H1 (cell line): ENCODE measurements at regions of chr4 and their contacts with region 1.

Region 1: GRCh38 chr4:143399113-143399949 is 62.7 kb downstream of the GAB1 start:
- DNase-seq: no peak
- H3K4me3 ChIP-seq: no peak overlapping the region
- H3K27ac ChIP-seq: no peak overlapping the region
- H3K4me1 ChIP-seq: peaks cover 0 to 4% (median 0%) of the 10 kb centered on the region in 4 experiments; a peak in 1 of 7 replicates
- H3K27me3 ChIP-seq: peaks cover 0 to 1% (median 0%) of the 10 kb centered on the region in 4 experiments; a peak in 1 of 7 replicates
- CTCF ChIP-seq: peak in 2 of 3 experiments; percentile 35 to 59; a peak in 2 of 4 replicates
- EP300 ChIP-seq: no peak
- POLR2A ChIP-seq: no peak
- RAD21 ChIP-seq: peak; percentile 11 to 48; a peak in 2 of 4 replicates

Region 2: DNA sequence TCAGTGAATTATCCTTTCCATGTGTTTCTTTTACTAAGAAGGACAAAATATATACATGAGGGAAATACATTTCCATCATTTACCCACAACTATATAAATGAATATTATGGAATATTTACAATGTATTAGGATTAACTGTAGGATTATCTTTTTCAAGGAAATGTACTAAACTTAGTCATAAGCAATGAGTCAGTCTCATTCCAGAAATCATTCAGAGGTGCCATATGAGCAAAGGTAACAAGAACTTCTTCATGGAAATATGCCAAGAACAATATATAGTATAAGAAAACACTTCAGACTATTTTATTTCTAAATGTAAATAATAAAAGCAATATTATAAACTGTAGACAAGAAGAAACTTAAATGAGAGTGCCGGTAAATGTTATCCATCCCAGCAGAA is 147.6 kb before region 1 on chr4:
- CTCF ChIA-PET with region 1: no interaction called
- POLR2A ChIA-PET with region 1: no interaction called
- DNase-seq: no peak
- H3K4me3 ChIP-seq: no peak overlapping the region
- H3K27ac ChIP-seq: no peak overlapping the region
- H3K4me1 ChIP-seq: peaks cover 0 to 2% (median 0%) of the 10 kb centered on the region in 4 experiments; a peak in 1 of 7 replicates
- H3K27me3 ChIP-seq: no peaks in the 10 kb centered on the region
- CTCF ChIP-seq: no peak
- EP300 ChIP-seq: no peak
- POLR2A ChIP-seq: no peak
- RAD21 ChIP-seq: no peak

Region 3: DNA sequence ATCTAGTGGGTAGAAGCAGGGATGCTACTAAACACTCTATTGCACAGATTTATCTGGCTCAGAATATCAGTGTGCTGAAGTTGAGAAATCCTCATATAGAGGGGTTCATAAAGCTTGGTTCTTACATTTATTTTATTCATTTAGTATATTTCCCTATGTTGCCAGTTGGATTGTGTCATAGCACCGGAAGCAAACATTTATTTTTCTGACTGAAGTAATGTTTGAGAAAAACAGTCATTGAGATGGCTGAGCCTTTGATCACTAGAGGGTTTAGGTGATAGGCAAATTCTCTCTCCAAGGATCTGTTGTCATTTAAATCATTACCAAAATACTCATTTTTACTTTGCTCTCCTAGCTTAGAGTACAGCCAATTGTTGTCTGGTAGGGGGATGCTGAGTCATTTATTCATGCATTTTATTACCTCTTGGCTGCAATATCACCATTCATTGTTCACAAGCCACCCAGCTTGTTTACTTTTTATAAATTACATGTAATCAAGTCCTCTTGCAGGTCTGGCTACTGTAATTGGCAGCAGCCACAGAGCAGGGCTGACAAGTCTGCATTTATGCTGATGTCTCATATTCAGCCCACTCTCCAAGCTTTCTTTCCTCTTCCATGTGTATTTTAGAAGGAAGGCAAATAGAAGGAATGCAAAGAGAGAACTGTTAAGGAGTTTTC is 47.4 kb before region 1 on chr4:
- CTCF ChIA-PET with region 1: interaction called, 11 read pairs
- POLR2A ChIA-PET with region 1: no interaction called
- DNase-seq: no peak
- H3K4me3 ChIP-seq: no peak overlapping the region
- H3K27ac ChIP-seq: no peak overlapping the region
- H3K4me1 ChIP-seq: peaks cover 5 to 18% (median 13%) of the 10 kb centered on the region in 4 experiments
- H3K27me3 ChIP-seq: no peaks in the 10 kb centered on the region
- CTCF ChIP-seq: no peak
- EP300 ChIP-seq: no peak
- POLR2A ChIP-seq: no peak
- RAD21 ChIP-seq: no peak

Region 4: DNA sequence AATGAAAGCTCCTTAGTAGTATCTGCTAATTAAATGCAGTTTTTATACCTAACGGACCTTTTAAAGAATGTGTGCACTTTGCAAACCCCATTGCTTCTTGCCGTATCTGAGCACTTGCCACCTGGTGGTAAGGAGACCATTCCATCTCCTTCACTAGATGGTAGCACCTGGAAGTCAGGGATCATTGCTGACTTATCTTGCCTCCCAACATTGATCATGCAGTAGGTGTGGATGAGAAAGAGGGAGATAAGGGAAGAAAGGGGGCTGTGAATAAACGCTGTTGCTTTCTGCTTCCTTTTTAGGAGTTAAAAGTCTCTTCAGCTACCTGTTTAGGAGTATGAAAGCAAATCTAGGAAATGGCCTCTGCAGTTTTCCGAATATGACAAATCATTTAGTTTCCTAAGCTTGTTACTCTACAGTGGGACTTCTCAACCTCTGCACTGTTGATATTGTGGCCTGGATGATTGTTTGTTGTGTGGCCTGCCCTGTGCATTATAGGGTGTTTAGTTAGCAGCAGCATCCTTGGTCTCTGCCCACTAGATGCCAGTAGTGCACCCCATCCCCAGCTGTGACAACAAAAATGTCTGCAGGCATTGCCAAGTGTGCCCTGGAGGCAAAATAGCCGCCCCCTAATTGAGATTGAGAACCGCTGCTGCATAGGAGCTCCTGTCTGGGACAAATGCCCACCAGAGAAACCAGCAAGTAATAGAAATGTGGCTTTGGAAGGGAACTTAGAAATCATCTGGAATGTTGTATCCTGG is 23.8 kb before region 1 on chr4:
- CTCF ChIA-PET with region 1: interaction called, 11 read pairs
- POLR2A ChIA-PET with region 1: no interaction called
- DNase-seq: no peak
- H3K4me3 ChIP-seq: no peak overlapping the region
- H3K27ac ChIP-seq: no peak overlapping the region
- H3K4me1 ChIP-seq: peaks cover 0 to 4% (median 0%) of the 10 kb centered on the region in 4 experiments; a peak in 2 of 7 replicates
- H3K27me3 ChIP-seq: no peaks in the 10 kb centered on the region
- CTCF ChIP-seq: peak; percentile 49 to 62 (median 57)
- EP300 ChIP-seq: no peak
- POLR2A ChIP-seq: no peak
- RAD21 ChIP-seq: peak; percentile 67 to 75

Region 5: DNA sequence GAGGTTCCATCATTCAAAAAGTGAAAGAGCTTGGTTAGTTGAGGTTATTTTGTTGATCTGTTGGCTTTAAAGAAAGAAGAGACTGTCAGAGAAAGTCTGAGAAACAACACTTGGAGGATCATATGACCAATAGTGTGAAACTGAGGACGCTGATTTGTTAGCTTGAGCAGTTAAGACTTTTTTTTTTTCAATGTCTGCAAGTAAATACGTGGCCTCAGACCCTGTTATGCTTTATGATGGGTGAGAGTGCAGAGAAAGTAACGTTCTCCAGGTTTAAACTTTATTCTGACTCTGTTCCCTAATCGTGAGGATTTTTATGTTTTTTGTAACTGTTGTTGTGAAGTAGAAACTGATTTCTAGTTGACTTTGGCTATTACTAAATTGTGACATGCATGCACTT is 16.7 kb before region 1 on chr4:
- CTCF ChIA-PET with region 1: interaction called, 30 read pairs
- POLR2A ChIA-PET with region 1: no interaction called
- DNase-seq: no peak
- H3K4me3 ChIP-seq: no peak overlapping the region
- H3K27ac ChIP-seq: no peak overlapping the region
- H3K4me1 ChIP-seq: peaks cover 2 to 15% (median 8%) of the 10 kb centered on the region in 4 experiments; a peak in 4 of 7 replicates
- H3K27me3 ChIP-seq: no peaks in the 10 kb centered on the region
- CTCF ChIP-seq: no peak
- EP300 ChIP-seq: no peak
- POLR2A ChIP-seq: no peak
- RAD21 ChIP-seq: no peak

Region 6: DNA sequence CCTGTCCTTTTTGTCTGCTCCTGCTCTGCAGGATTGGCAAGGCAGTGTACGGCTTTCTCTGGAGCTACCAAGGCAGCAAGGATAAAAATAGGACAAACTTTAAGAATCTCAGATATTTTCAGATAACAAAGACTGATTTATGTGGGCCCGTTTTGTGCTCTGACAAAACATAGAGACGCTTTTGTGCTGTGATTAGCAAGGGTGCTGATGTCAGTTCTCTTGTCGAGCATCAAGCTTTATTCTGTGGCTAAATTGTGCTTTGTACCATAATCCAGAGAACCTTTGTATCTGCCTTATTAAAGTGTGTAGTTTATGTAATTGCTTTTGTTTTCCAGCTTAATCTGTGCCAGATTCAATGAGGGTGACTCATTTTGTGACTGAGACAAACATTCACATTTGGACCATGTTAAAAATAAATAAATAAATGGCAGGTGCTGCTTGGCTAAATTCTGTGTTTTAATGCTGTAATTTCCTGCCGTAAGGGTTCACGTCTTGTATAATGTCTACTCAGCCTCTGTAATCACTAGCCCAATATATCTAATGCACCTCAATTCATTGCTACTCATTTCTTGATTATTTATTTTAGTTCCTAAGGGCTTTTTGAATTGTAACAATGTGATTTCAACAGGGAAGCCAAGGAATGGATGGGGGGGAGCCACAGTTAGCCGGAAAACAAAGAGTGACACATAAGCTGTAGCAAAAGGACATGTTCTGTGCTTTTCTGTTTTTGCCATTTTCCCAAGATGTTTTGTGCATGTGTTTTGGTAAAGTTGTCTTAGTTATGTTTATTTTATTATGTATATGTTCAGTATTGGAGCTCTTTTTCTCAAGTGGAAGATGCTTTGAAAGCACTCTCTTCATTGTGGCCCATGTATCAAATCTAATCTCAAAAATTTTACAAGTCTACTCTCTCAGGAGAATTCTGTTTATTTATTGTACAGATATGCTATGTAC is 12.5 kb after region 1 on chr4:
- CTCF ChIA-PET with region 1: interaction called, 10 read pairs
- POLR2A ChIA-PET with region 1: no interaction called
- DNase-seq: no peak
- H3K4me3 ChIP-seq: no peak overlapping the region
- H3K27ac ChIP-seq: no peak overlapping the region
- H3K4me1 ChIP-seq: 0 out of 7 replicates have a peak, but pooled peaks cover 0 to 2% (median 0%) of the 10 kb centered on the region in 4 experiments
- H3K27me3 ChIP-seq: no peaks in the 10 kb centered on the region
- CTCF ChIP-seq: no peak
- EP300 ChIP-seq: no peak
- POLR2A ChIP-seq: no peak
- RAD21 ChIP-seq: no peak